ENCODE measurements at regions of chr15 and their contacts with region 1.

Region 1: GRCh38 chr15:71443538-71443937 is 328.3 kb downstream of the THSD4 start:
- DNase-seq: peak; percentile 73
- H3K4me3 ChIP-seq: no peak overlapping the region
- H3K27ac ChIP-seq: no peak overlapping the region
- H3K4me1 ChIP-seq: peaks cover 5% of the 10 kb centered on the region
- H3K27me3 ChIP-seq: no peaks in the 10 kb centered on the region
- CTCF ChIP-seq: peak; percentile 92

Region 2: GRCh38 chr15:71011503-71012155 is 431.9 kb before region 1 on chr15:
- intact Hi-C with region 1: loop called (anchors 5 kb)
- DNase-seq: peak; percentile 23
- H3K4me3 ChIP-seq: no peak overlapping the region
- H3K27ac ChIP-seq: no peak overlapping the region
- H3K4me1 ChIP-seq: no peaks in the 10 kb centered on the region
- H3K27me3 ChIP-seq: no peaks in the 10 kb centered on the region
- CTCF ChIP-seq: peak; percentile 66

Region 3: DNA sequence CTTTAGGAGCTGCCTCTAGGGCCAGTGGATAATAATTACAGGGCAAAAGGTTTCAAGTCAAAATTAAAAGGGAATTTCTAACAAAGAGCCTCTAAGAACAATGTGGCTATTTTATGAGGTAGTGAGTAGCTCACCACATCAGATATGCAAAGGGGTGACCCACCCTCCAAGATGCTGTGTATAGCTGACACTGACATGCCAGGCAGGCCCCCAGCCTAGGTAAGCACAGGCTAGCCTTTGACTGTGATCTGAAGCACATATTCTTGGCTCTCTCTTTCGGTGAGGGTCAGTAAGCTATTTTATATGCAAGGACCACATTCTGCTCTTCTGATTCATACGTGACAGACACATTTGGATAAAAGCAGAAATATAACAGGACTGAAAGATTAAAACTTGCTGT is 331.1 kb before region 1 on chr15:
- intact Hi-C with region 1: loop called (anchors 2 kb)
- DNase-seq: no peak
- H3K4me3 ChIP-seq: no peak overlapping the region
- H3K27ac ChIP-seq: no peak overlapping the region
- H3K4me1 ChIP-seq: no peaks in the 10 kb centered on the region
- H3K27me3 ChIP-seq: no peaks in the 10 kb centered on the region
- CTCF ChIP-seq: no peak

Region 4: GRCh38 chr15:71392821-71393782 is 50.4 kb before region 1 on chr15:
- intact Hi-C with region 1: loop called (anchors 2 kb)
- DNase-seq: no peak
- H3K4me3 ChIP-seq: no peak overlapping the region
- H3K27ac ChIP-seq: no peak overlapping the region
- H3K4me1 ChIP-seq: peaks cover 4% of the 10 kb centered on the region
- H3K27me3 ChIP-seq: no peaks in the 10 kb centered on the region
- CTCF ChIP-seq: no peak

Region 5: DNA sequence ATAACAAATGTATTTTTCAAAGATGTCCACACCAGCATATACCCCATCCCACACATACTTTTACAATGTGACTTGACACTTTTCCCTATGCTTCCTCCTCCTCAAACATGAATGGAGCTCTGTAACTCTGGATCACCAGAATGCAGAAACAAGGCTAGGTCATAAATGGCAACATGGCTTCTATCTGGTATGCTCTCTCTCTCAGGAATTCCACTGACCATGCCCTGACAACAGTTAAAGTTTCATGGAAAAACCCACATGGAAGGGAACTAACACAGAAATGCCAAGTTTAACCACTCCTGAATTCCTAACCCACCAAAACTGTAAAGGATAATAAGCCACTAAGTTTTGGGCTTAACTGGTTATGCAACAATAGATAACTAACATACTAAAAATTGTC is 654.5 kb after region 1 on chr15:
- intact Hi-C with region 1: no loop called
- DNase-seq: no peak
- H3K4me3 ChIP-seq: no peak overlapping the region
- H3K27ac ChIP-seq: no peak overlapping the region
- H3K4me1 ChIP-seq: no peaks in the 10 kb centered on the region
- H3K27me3 ChIP-seq: no peaks in the 10 kb centered on the region
- CTCF ChIP-seq: no peak